ENCODE measurements at regions of chr1 and their contacts with region 1.

Region 1: GRCh38 chr1:26993237-26994019 is at the start of gene TRNP1:
- H3K4me3 ChIP-seq: peak within 1 kb of the TSS; percentile 57
- H3K27ac ChIP-seq: peak within 1 kb of the TSS; percentile 44; the same call in 1 of the 2 replicates
- H3K4me1 ChIP-seq: no peaks in the 10 kb centered on the region; the same call in 1 of the 2 replicates
- CTCF ChIP-seq: peak; percentile 42; the same call in 1 of the 2 replicates

Region 2: GRCh38 chr1:26429721-26430120 is 563.7 kb before region 1 on chr1:
- CTCF ChIA-PET with region 1: no interaction called
- POLR2A ChIA-PET with region 1: no interaction called
- H3K4me3 ChIP-seq: no peak overlapping the region
- H3K27ac ChIP-seq: no peak overlapping the region
- H3K4me1 ChIP-seq: peaks cover 5% of the 10 kb centered on the region
- CTCF ChIP-seq: no peak

Region 3: GRCh38 chr1:26959722-26960615 is 33.5 kb before region 1 on chr1 and contains the start of gene KDF1:
- CTCF ChIA-PET with region 1: interaction called, 6 read pairs
- POLR2A ChIA-PET with region 1: interaction called, 10 read pairs
- H3K4me3 ChIP-seq: peak within 1 kb of the TSS; percentile 58
- H3K27ac ChIP-seq: peak within 1 kb of the TSS; percentile 21; the same call in 1 of the 2 replicates
- H3K4me1 ChIP-seq: no peaks in the 10 kb centered on the region; the same call in 1 of the 2 replicates
- CTCF ChIP-seq: no peak

Region 4: GRCh38 chr1:26965640-26966039 is 27.8 kb before region 1 on chr1:
- CTCF ChIA-PET with region 1: interaction called, 64 read pairs
- POLR2A ChIA-PET with region 1: interaction called, 10 read pairs
- H3K4me3 ChIP-seq: no peak overlapping the region
- H3K27ac ChIP-seq: no peak overlapping the region
- H3K4me1 ChIP-seq: no peaks in the 10 kb centered on the region
- CTCF ChIP-seq: no peak

Region 5: DNA sequence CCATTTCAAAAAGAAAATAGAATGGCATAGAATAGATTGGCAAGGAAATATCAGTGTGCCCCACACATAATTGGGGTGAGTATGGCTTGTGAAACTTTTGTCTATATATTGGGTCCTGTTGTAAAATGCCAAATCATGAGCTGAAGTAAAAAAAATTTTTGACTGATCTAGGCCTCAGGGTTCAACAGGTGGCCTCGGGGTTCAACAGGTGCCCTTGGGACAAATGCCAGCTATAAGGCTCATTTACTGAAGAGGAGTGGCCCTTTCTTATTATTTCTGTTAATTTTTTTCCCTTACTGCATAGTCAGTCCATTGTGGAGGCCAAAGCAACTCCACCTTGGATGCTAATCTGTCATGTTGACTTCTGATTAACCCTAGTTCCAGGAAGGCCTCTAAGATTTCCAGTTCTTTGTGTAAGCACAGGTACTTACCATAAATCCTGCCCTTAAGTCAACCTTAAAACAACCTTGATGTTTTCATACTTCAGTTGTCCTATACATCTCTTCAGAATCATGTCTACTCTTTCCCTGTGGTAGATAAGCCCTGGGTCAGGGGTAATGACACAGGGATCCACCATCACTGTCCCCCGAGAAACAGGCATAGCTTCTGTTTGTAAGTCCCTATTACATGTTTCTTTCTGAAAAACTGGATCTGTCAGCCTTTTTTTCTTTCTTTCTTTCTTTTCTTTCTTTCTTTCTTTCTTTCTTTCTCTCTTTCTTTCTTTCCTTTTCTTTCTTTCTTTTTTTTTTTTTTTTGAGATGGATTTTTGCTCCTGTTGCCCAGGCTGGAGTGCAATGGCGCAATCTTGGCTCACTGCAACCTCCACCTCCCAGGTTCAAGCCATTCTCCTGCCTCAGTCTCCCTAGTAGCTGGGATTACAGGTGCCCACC is 16.6 kb before region 1 on chr1:
- CTCF ChIA-PET with region 1: interaction called, 11 read pairs
- POLR2A ChIA-PET with region 1: no interaction called
- H3K4me3 ChIP-seq: no peak overlapping the region
- H3K27ac ChIP-seq: no peak overlapping the region
- H3K4me1 ChIP-seq: no peaks in the 10 kb centered on the region
- CTCF ChIP-seq: no peak

Region 6: DNA sequence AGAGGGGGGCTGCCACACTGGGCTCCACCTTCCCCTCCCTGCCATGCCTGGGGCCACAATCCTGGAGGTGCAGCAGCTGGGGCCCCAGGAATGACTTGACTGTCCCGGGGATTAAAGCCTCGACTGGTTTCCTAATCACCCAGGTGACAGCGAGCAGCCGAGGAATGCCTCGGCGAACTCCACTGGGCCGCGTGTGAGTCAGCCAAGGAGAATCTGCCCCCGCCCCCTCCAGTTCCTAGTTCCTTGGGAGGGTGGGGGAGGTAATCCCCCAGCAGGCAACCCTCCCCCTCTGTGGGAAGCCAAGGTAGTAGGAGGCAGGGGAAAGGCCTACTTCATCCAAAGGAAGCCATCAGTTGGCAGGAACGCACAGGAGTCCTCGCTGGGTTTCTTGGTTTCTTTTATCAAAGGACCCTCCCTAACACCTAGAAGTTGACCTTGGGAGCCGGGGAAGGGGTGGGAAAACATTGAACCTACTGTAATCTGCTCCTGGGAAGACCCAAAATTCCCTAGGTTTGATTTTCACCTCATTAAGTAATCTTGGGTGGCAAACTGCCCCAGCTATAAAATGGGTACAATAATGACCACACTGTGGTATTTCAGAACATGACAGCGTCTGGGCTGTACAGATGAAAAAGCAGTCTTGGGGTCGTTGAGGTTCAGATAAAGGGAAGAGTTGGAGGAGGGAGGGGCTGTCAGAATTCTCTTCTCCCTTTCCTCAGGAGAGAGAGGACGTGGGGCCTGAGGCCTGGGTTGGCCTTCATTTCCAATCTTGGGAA is 17.7 kb after region 1 on chr1:
- CTCF ChIA-PET with region 1: interaction called, 24 read pairs
- POLR2A ChIA-PET with region 1: interaction called, 5 read pairs
- H3K4me3 ChIP-seq: no peak overlapping the region
- H3K27ac ChIP-seq: no peak overlapping the region
- H3K4me1 ChIP-seq: no peaks in the 10 kb centered on the region
- CTCF ChIP-seq: no peak